ENCODE measurements at regions of chr12 and their contacts with region 1.

Region 1: GRCh38 chr12:82554529-82554928 is 132.2 kb upstream of the TMTC2 start:
- DNase-seq: peak; percentile 54
- H3K4me3 ChIP-seq: no peak overlapping the region
- H3K27ac ChIP-seq: no peak overlapping the region
- H3K4me1 ChIP-seq: peaks cover 12% of the 10 kb centered on the region
- H3K27me3 ChIP-seq: no peaks in the 10 kb centered on the region
- CTCF ChIP-seq: no peak
- POLR2A ChIP-seq: no peak

Region 2: DNA sequence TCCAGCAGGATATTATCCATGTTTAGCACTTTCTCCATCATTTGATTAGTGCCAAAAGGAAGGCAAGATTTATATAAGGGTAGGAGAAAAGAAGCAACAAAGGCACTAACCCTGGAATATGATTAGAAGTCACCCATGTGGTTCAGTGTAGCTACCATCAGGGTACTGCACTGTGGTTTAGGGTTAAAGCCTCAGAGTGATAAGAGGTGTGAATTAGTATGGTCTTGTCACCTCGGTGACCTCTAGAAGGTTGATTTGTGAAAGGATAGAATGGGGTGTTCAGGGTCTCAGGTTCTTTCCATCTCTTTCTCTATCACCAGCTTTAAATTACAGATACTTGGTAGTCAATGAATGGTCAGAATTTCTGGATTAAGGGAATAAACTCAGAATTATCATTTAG is 29.2 kb after region 1 on chr12:
- CTCF ChIA-PET with region 1: no interaction called
- POLR2A ChIA-PET with region 1: no interaction called
- dilution Hi-C with region 1: no loop called
- intact Hi-C with region 1: loop called (anchors 2 kb)
- DNase-seq: no peak
- H3K4me3 ChIP-seq: no peak overlapping the region
- H3K27ac ChIP-seq: no peak overlapping the region
- H3K4me1 ChIP-seq: peaks cover 6% of the 10 kb centered on the region
- H3K27me3 ChIP-seq: no peaks in the 10 kb centered on the region
- CTCF ChIP-seq: no peak
- POLR2A ChIP-seq: no peak

Measured in endothelial cell of umbilical vein (primary cell).